Activated CD4-positive, alpha-beta T cell treated with anti-CD3 and anti-CD28 coated beads for 36 hours (primary cell): ENCODE measurements at regions of chr9 and their contacts with region 1.

Region 1: DNA sequence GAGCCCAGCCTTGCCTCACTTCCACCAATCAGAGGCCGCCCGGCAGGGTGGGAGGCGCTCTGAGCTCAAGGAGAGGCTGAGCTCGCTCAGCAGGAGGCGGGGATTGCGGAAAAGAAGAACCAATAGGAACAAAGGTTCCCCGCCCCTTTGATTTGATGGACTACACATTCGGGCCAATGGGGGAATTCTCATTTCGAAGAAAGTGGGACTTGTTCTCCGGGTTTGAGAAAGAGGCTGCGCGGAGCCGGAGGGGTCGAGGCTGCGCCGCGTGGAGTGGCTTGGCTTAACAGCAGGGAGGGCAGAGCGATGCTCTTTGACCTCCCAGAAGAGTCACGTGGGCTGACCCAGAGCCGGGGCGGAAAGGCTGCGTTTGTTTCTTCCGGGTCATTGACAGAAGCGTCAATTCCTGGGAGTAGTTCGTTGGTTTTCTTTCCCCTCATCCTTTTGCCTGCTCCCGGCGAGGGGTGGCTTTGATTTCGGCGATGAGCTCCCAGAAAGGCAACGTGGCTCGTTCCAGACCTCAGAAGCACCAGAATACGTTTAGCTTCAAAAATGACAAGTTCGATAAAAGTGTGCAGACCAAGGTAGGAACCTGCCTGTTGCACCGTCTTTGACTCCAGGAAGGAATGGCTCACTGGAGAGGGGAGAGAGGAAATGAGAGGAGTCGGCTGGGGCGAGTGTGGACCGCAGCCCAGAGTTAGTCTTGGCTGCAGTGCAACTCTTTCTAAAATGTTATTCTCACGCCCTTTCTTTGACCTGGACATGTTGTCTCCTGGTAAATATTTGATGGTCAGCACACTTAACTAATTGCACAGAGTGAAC is at the start of gene C9orf85:
- DNase-seq: peak; percentile 98
- ATAC-seq: peak; percentile 94
- H3K4me3 Mint-ChIP-seq: peak within 1 kb of the TSS; percentile 98
- H3K27ac Mint-ChIP-seq: peak within 1 kb of the TSS; percentile 94
- H3K4me1 Mint-ChIP-seq: peaks cover 59% of the 10 kb centered on the region
- H3K27me3 Mint-ChIP-seq: no peaks in the 10 kb centered on the region
- total RNA-seq, gene C9orf85: 10.2 to 10.4 TPM

Region 2: GRCh38 chr9:71768388-71769174 is 142.9 kb before region 1 on chr9 and contains the start of gene CEMIP2:
- CTCF ChIA-PET with region 1: interaction called, 3 read pairs
- POLR2A ChIA-PET with region 1: interaction called, 10 read pairs
- intact Hi-C with region 1: loop called in 1 of 2 experiments (anchors 1 kb)
- DNase-seq: peak; percentile 94
- ATAC-seq: peak; percentile 78
- H3K4me3 Mint-ChIP-seq: peak within 1 kb of the TSS; percentile 94
- H3K27ac Mint-ChIP-seq: peak within 1 kb of the TSS; percentile 91
- H3K4me1 Mint-ChIP-seq: peaks cover 43% of the 10 kb centered on the region
- H3K27me3 Mint-ChIP-seq: no peaks in the 10 kb centered on the region
- total RNA-seq, gene CEMIP2: 34.1 to 41.0 TPM

Region 3: GRCh38 chr9:71819115-71819739 is 92.2 kb before region 1 on chr9:
- CTCF ChIA-PET with region 1: interaction called, 3 read pairs
- POLR2A ChIA-PET with region 1: no interaction called
- intact Hi-C with region 1: loop called in 1 of 2 experiments (anchors 2 kb)
- DNase-seq: peak; percentile 59
- ATAC-seq: no peak
- H3K4me3 Mint-ChIP-seq: no peak overlapping the region
- H3K27ac Mint-ChIP-seq: no peak overlapping the region
- H3K4me1 Mint-ChIP-seq: peaks cover 15% of the 10 kb centered on the region
- H3K27me3 Mint-ChIP-seq: no peaks in the 10 kb centered on the region

Region 4: DNA sequence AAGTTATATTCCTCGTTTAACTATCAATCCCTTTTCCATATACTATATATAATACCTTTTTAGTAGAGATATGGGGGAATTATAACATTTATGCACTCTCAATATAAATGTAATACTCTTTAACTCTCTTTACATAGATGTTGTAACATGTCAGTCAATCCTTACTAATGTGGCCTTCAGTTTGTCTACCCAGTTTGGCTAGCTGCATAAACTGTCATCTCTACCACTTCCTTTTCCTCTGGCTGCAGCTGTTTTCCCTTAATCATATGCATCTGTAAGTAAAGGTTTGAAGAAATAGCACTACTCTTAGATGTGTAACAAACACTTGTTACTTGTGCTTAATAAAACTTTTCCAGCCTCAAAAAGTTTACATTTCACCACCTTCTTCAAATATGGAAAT is 13.9 kb before region 1 on chr9:
- CTCF ChIA-PET with region 1: interaction called, 4 read pairs
- POLR2A ChIA-PET with region 1: interaction called, 3 read pairs
- intact Hi-C with region 1: loop called in 1 of 2 experiments (anchors 1 kb)
- DNase-seq: no peak
- ATAC-seq: peak; percentile 69
- H3K4me3 Mint-ChIP-seq: no peak overlapping the region
- H3K27ac Mint-ChIP-seq: no peak overlapping the region
- H3K4me1 Mint-ChIP-seq: peaks cover 75% of the 10 kb centered on the region
- H3K27me3 Mint-ChIP-seq: no peaks in the 10 kb centered on the region

Region 5: GRCh38 chr9:73132034-73132776 is 1220.7 kb after region 1 on chr9:
- CTCF ChIA-PET with region 1: no interaction called
- POLR2A ChIA-PET with region 1: no interaction called
- intact Hi-C with region 1: loop called in 1 of 2 experiments (anchors 10 kb)
- DNase-seq: peak; percentile 81
- ATAC-seq: peak; percentile 90
- H3K4me3 Mint-ChIP-seq: peak overlapping the region; percentile 72
- H3K27ac Mint-ChIP-seq: peak overlapping the region; percentile 86
- H3K4me1 Mint-ChIP-seq: peaks cover 37% of the 10 kb centered on the region
- H3K27me3 Mint-ChIP-seq: no peaks in the 10 kb centered on the region